ENCODE measurements at regions of chr11 and their contacts with region 1.

Region 1: DNA sequence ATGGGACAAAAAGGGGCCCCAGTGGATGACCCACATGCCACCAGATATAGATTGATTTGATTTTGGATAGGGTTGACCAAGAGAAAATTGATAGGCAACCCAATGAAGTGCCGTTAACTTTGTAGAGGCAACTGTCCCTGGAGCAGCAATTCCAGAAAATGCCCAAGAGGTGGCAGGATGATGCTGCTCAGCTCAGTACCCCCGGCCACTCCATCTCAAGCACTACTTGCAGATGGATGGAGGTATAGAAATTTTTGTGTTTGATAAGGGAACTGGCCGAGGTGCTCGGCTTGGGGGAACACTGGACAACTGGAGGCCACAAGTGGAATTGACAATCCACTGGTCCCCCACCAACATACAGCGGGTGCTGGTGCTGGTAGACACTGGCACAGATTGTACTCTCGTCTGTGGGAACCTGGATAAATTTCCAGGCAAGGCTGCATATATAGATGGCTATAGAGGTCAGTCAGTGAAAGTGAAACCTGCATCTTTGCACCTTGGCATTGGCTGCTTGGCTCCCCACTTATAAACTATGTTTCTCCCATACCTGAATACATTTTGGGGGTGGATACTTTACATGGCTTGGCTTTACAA is 86.3 kb downstream of the CCDC83 start:
- DNase-seq: peak in 9 of 10 donors; percentile 36 to 72 (median 60)
- H3K4me3 ChIP-seq: no peak overlapping the region
- H3K27ac ChIP-seq: no peak overlapping the region
- H3K27me3 ChIP-seq: no peaks in the 10 kb centered on the region
- CTCF ChIP-seq: peak; percentile 55 to 92 (median 79)

Region 2: GRCh38 chr11:85694386-85694980 is 247.0 kb before region 1 on chr11:
- intact Hi-C with region 1: loop called in 1 of 2 experiments (anchors 10 kb)
- DNase-seq: no peak
- H3K4me3 ChIP-seq: no peak overlapping the region
- H3K27ac ChIP-seq: peak overlapping the region in 2 of 59 donors; percentile 7 to 11
- H3K27me3 ChIP-seq: no peaks in the 10 kb centered on the region
- CTCF ChIP-seq: peak in 55 of 56 donors; percentile 56 to 90 (median 69)

Region 3: GRCh38 chr11:85988780-85989179 is 47.3 kb after region 1 on chr11:
- intact Hi-C with region 1: no loop called
- DNase-seq: no peak
- H3K4me3 ChIP-seq: no peak overlapping the region
- H3K27ac ChIP-seq: peak overlapping the region in 25 of 59 donors; percentile 1 to 68 (median 25)
- H3K27me3 ChIP-seq: no peaks in the 10 kb centered on the region
- CTCF ChIP-seq: no peak

Region 4: GRCh38 chr11:86202013-86202336 is 260.5 kb after region 1 on chr11:
- intact Hi-C with region 1: loop called (anchors 2 to 5 kb)
- DNase-seq: no peak
- H3K4me3 ChIP-seq: peak overlapping the region in 57 of 59 donors; percentile 4 to 66 (median 47)
- H3K27ac ChIP-seq: peak overlapping the region in 53 of 59 donors; percentile 3 to 85 (median 58)
- H3K27me3 ChIP-seq: no peaks in the 10 kb centered on the region
- CTCF ChIP-seq: no peak

Region 5: GRCh38 chr11:86218125-86219084 is 276.9 kb after region 1 on chr11:
- intact Hi-C with region 1: loop called (anchors 2 to 5 kb)
- DNase-seq: peak; percentile 46 to 72 (median 60)
- H3K4me3 ChIP-seq: peak overlapping the region in 58 of 59 donors; percentile 2 to 64 (median 42)
- H3K27ac ChIP-seq: peak overlapping the region in 40 of 59 donors; percentile 5 to 80 (median 52)
- H3K27me3 ChIP-seq: no peaks in the 10 kb centered on the region
- CTCF ChIP-seq: peak; percentile 63 to 95 (median 89)

Region 6: DNA sequence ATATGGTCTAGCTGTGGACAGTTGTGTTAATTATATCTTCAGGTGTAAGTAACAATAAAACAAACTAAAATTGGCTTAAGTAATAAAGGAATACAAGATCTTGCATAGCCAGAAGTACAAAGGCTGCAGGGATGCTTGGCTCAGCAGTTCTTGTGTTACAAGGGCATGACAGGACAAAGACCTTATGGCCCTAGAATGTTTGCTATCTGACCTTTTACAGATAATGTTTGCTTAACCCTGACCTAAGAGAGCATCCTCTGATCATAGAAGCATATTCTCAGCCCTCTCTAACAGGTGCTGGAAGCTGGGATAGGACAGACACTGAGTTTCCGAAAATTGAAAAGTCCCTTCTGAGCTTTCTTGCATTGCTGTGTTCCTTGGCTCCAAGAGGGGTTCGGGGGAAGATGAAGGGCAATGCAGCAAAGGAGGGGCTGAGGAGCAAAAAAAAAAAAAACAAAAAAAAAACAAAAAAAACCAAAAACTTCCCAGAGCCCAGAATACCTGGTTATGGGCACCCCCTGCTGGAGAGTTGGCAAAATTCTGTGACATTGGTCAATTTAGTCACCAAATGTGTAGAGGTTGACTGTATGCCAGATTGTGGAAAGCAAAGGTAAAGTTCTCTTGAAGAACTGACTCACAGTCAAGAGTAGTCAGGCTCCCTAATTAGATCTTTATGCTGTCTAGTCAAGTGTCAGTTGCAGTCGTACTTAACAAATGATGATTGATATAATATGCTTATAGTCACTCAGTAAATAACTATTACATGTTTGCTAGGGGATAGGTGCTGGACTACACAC is 350.2 kb after region 1 on chr11:
- intact Hi-C with region 1: loop called (anchors 5 kb)
- DNase-seq: peak in 5 of 10 donors; percentile 35 to 58 (median 49)
- H3K4me3 ChIP-seq: no peak overlapping the region
- H3K27ac ChIP-seq: no peak overlapping the region
- H3K27me3 ChIP-seq: no peaks in the 10 kb centered on the region
- CTCF ChIP-seq: peak; percentile 51 to 81 (median 72)

Region 7: DNA sequence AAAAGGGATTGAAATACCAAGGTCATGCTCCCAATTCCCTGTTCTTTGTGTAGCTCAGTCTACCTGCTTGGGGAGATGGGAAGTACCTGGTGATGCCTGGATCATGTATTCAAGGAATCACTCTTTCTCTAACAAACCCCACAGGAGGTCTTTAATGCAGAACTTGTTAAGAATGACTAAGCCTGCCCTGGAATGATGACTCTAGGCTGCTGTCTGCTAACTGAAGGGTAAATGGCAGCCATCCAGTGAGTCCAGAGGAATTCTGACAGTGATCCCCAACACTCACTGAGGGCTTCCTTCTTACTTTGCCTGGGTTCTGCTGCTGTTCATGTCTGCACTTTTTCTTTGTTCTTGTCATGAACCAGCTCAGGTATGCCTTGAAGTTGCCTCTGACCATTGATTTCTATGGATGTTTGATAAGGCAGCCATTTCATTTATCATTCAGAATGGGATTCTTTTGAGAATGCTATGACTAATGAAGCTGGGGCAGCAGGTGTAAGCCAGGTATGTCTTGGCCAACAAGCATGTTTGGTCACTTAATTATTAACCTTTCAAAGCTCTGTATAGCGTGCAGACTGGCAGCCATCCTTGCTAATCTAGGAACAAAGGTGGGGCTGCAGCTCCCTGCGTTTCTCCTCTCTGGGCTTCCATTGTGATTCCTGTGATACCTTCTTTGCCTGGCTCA is 870.3 kb after region 1 on chr11:
- intact Hi-C with region 1: loop called in 1 of 2 experiments (anchors 5 kb)
- DNase-seq: no peak
- H3K4me3 ChIP-seq: no peak overlapping the region
- H3K27ac ChIP-seq: no peak overlapping the region
- H3K27me3 ChIP-seq: peaks cover 0 to 2% (median 0%) of the 10 kb centered on the region in 45 donors
- CTCF ChIP-seq: no peak

Measured in dorsolateral prefrontal cortex (tissue), 120 donors.